Activated naive CD4-positive, alpha-beta T cell treated with anti-CD3 and anti-CD28 coated beads for 36 hours (primary cell): ENCODE measurements at regions of chr2 and their contacts with region 1.

Region 1: GRCh38 chr2:209423562-209424198 is at the start of gene MAP2:
- DNase-seq: peak; percentile 74
- H3K4me3 Mint-ChIP-seq: peak within 1 kb of the TSS; percentile 73
- H3K27ac Mint-ChIP-seq: no peak within 1 kb of the TSS
- H3K4me1 Mint-ChIP-seq: peaks cover 12% of the 10 kb centered on the region
- H3K27me3 Mint-ChIP-seq: peaks cover 42% of the 10 kb centered on the region
- total RNA-seq, gene MAP2: 0.20 to 0.67 TPM

Region 2: DNA sequence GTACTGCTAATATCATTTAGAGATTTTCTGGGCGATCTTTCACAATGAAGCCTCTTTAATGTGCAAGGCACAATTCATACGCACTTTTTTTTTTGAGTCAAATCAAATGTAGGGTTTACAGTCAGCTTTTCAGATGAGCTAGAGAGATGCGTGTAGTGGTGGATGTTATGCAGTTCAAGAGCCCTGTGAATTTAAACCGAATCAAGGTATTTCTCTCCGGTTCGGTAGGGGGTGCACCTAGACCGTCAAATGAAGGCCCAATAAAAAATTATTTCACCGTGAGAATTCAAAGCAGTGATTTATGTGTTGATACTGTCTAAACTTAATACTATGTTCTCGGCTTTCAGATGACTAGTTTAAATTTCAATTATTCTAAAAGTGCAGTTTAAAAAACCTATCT is 1016.0 kb before region 1 on chr2:
- CTCF ChIA-PET with region 1: no interaction called
- intact Hi-C with region 1: loop called (anchors 5 kb)
- DNase-seq: peak; percentile 20
- H3K4me3 Mint-ChIP-seq: no peak overlapping the region
- H3K27ac Mint-ChIP-seq: no peak overlapping the region
- H3K4me1 Mint-ChIP-seq: peaks cover 10% of the 10 kb centered on the region
- H3K27me3 Mint-ChIP-seq: peaks cover 44% of the 10 kb centered on the region

Region 3: GRCh38 chr2:209556354-209556961 is 132.8 kb after region 1 on chr2:
- CTCF ChIA-PET with region 1: interaction called, 3 read pairs
- intact Hi-C with region 1: loop called (anchors 1 kb)
- DNase-seq: no peak
- H3K4me3 Mint-ChIP-seq: no peak overlapping the region
- H3K27ac Mint-ChIP-seq: no peak overlapping the region
- H3K4me1 Mint-ChIP-seq: no peaks in the 10 kb centered on the region
- H3K27me3 Mint-ChIP-seq: no peaks in the 10 kb centered on the region

Region 4: DNA sequence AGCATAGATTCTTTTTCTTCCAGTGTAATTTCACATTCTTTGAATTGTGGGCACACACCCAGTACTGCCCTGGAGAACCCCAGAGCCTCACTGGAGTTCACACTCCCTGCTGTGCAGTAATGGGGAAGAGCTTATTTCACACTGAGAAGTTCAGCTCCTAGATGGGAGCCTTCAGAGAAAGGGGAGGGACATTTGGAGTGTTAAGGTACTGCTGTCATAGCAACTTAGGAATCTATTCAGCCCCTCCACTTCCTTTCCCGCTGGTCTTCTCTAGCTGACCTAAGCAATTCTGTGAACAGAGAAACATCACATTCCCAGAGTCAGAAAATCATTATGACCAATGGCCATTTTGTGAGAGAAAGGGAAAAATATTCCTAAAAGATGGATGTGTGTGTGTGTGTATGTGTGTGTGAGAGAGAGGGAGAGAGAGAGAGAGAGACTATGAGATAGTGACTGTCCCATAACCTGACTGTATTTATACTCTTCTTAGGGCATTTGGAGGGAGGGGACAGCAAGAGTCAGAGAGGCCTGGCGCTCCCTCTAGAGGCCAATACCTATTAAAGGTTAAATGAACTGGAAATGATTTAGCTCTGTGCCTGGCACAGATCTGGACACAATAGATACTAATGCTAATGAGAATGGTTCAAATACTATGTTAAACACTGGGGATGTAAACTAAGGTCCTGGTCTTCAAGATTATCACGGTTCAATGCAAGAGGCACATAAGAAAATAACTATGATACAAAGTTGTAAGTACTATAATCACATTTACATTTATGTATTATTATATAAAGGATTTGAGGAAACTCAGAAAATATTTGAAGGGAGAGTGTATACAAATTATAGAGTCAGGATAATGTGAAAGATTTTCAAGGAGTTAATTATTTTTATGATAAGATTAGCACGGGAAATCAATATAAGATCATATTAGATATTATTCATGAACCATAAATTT is 537.3 kb after region 1 on chr2:
- CTCF ChIA-PET with region 1: interaction called, 4 read pairs
- intact Hi-C with region 1: loop called (anchors 1 kb)
- DNase-seq: peak; percentile 63
- H3K4me3 Mint-ChIP-seq: no peak overlapping the region
- H3K27ac Mint-ChIP-seq: no peak overlapping the region
- H3K4me1 Mint-ChIP-seq: no peaks in the 10 kb centered on the region
- H3K27me3 Mint-ChIP-seq: no peaks in the 10 kb centered on the region